Endothelial cell of umbilical vein (primary cell): ENCODE measurements at regions of chr11 and their contacts with region 1.

Region 1: DNA sequence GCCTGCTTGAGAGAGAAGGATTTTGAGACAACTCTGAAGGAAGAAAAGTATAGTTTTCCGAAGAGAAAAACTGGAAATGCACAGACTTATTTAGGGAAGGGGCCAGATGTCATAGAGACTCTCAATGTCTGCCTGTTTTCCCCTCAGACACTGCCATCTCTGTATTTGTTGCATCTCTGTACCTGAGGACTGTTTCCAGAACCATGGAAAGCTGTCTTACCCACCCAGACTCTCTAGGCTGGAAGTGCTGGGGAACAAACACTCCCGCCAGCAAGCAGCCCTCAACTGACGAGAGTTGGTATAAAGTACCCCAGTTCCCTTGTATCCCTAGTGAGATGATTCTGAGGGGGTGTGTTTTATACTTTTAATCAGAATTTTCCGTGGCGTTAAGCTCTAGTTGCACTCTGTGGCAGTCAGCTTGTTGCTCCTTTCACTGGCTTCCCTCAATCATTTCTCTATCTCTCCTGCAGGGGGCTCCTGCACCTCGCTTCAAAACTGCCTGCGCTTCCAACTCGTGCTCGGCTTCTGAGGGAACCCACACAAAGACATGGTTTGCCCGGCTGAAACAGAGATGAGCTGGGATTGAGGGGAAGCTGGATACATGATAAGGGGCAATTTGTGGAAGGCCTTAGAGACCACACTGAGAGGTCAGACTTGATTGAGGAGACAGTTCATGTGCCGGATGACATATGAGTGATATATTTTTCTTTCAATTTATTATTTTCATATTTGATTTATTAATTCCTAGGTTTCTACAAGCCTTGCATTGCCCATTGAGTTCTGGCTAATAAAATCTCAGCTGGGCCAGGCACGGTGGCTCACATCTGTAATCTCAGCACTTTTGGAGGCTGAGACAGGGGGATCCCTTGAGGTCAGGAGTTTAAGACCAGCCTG is 36.9 kb upstream of the CLPB start:
- DNase-seq: peak; percentile 72
- H3K4me3 ChIP-seq: no peak overlapping the region
- H3K27ac ChIP-seq: no peak overlapping the region
- H3K4me1 ChIP-seq: no peaks in the 10 kb centered on the region
- H3K27me3 ChIP-seq: peaks cover 18 to 31% of the 10 kb centered on the region in 2 experiments
- CTCF ChIP-seq: peak; percentile 84 to 85
- POLR2A ChIP-seq: no peak

Region 2: DNA sequence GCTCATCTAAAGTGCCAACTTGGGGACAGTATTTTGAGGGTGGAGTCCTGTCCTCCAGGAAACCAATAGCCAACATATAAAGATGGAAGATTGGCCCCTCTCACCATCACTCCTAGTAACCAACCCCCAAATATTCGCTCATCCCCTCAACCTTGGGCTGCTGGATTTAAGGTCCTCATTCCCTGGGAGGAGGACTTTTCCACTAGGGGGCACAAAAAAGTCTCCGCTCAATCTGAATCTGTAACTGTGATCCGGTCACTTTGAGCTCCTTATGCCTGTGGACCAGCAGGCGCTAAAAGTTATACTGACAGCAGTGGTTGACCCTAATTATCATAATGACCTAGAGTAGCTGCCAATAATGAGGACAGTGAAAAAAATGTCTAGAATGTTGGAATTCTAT is 16.5 kb before region 1 on chr11:
- CTCF ChIA-PET with region 1: interaction called, 41 read pairs
- POLR2A ChIA-PET with region 1: no interaction called
- dilution Hi-C with region 1: no loop called
- intact Hi-C with region 1: no loop called
- DNase-seq: no peak
- H3K4me3 ChIP-seq: no peak overlapping the region
- H3K27ac ChIP-seq: no peak overlapping the region
- H3K4me1 ChIP-seq: no peaks in the 10 kb centered on the region
- H3K27me3 ChIP-seq: peaks cover 3 to 18% of the 10 kb centered on the region in 2 experiments
- CTCF ChIP-seq: no peak
- POLR2A ChIP-seq: no peak

Region 3: DNA sequence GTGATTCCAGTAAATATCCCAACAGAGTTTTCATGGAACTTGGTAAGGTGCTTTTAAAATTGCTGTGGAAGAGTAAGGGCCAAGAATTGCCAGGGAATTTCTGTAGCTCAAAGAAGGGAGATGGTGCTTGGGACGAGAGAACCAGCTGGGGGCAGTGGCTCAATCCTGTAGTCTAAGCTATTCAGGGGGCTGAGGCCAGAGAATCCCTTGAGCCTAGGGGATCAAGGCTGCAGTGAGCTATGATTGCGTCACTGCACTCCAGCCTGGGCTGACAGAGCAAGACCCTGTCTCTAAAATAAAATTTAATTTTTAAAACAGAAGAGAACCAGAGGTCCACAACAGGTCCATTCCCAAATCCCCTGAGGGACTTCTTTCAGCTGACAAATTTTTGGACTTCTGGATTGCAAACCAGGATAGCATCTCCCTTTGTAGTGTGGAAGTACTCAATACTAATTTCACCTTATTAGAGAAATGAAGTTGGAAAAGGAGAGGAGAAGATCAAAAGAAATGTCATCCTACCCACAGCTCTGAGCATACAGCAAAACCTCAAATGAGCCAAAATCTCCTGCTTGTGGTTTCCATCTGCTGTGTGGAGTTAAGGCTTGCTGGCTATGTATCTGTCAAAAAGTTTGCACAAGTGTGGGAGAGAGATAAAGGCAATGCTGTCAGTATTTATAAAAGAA is 22.3 kb after region 1 on chr11:
- CTCF ChIA-PET with region 1: interaction called, 17 read pairs
- POLR2A ChIA-PET with region 1: no interaction called
- dilution Hi-C with region 1: no loop called
- intact Hi-C with region 1: no loop called
- DNase-seq: no peak
- H3K4me3 ChIP-seq: no peak overlapping the region
- H3K27ac ChIP-seq: no peak overlapping the region
- H3K4me1 ChIP-seq: no peaks in the 10 kb centered on the region
- H3K27me3 ChIP-seq: peaks cover 4 to 22% of the 10 kb centered on the region in 2 experiments
- CTCF ChIP-seq: no peak
- POLR2A ChIP-seq: no peak

Region 4: DNA sequence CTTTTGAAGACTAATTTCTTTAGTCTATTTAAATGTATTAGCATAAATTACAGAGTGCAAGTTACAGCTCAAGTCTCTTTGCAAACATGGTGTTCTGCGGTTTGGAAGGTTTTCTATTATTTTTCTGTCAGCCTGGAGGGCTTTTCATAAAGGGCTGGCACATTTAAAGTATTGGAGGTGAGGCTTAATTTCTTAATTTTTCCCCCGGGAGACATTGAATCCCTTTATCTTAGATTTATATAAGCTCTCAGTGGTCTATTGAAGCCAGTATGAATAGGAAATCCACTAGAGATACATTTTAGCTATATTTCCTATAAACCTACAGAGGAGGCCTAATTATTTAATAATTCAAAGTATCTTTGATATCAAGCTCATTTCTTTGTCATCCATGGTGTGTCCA is 65.8 kb after region 1 on chr11:
- CTCF ChIA-PET with region 1: interaction called, 11 read pairs
- POLR2A ChIA-PET with region 1: no interaction called
- dilution Hi-C with region 1: no loop called
- intact Hi-C with region 1: no loop called
- DNase-seq: no peak
- H3K4me3 ChIP-seq: no peak overlapping the region
- H3K27ac ChIP-seq: no peak overlapping the region
- H3K4me1 ChIP-seq: no peaks in the 10 kb centered on the region
- H3K27me3 ChIP-seq: peaks cover 25 to 29% of the 10 kb centered on the region in 2 experiments
- CTCF ChIP-seq: no peak
- POLR2A ChIP-seq: no peak

Region 5: GRCh38 chr11:72561856-72562255 is 90.6 kb after region 1 on chr11:
- CTCF ChIA-PET with region 1: interaction called, 22 read pairs
- POLR2A ChIA-PET with region 1: no interaction called
- dilution Hi-C with region 1: no loop called
- intact Hi-C with region 1: no loop called
- DNase-seq: no peak
- H3K4me3 ChIP-seq: no peak overlapping the region
- H3K27ac ChIP-seq: no peak overlapping the region
- H3K4me1 ChIP-seq: no peaks in the 10 kb centered on the region
- H3K27me3 ChIP-seq: peaks cover 13 to 18% of the 10 kb centered on the region in 2 experiments
- CTCF ChIP-seq: no peak
- POLR2A ChIP-seq: no peak

Region 6: GRCh38 chr11:72585762-72586311 is 114.6 kb after region 1 on chr11:
- CTCF ChIA-PET with region 1: interaction called, 26 read pairs
- POLR2A ChIA-PET with region 1: no interaction called
- dilution Hi-C with region 1: no loop called
- intact Hi-C with region 1: loop called (anchors 1 kb)
- DNase-seq: peak; percentile 69
- H3K4me3 ChIP-seq: no peak overlapping the region
- H3K27ac ChIP-seq: no peak overlapping the region
- H3K4me1 ChIP-seq: no peaks in the 10 kb centered on the region
- H3K27me3 ChIP-seq: peaks cover 2 to 6% of the 10 kb centered on the region in 2 experiments
- CTCF ChIP-seq: peak; percentile 83 to 86
- POLR2A ChIP-seq: no peak